ENCODE measurements at regions of chr5 and their contacts with region 1.

Region 1: GRCh38 chr5:119274767-119275130 is 81.1 kb upstream of the TNFAIP8 start:
- DNase-seq: no peak
- H3K4me3 Mint-ChIP-seq: peak overlapping the region; percentile 78
- H3K27ac Mint-ChIP-seq: peak overlapping the region; percentile 99
- H3K4me1 Mint-ChIP-seq: peaks cover 88% of the 10 kb centered on the region
- H3K27me3 Mint-ChIP-seq: peaks cover 1% of the 10 kb centered on the region

Region 2: DNA sequence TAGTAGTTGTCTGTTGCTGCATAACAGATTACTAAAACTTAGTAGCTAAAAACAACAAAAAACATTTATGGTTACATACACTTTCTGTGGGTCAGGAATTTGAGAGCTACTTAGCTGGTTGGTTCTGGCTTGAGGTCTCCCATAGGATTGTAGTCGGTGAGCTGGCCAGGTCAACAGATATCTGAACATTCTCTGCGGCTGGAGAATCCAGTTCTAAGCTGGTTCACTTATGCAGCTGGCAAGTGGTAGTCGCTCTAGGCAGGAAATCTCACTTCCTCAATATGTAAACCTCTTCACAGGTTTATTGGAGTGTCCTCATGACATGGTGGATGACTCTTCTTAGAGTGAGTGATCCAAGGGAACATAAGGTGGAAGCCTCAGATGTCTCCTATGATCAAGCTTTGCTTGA is 15.4 kb after region 1 on chr5:
- CTCF ChIA-PET with region 1: interaction called, 6 read pairs
- POLR2A ChIA-PET with region 1: interaction called, 37 read pairs
- intact Hi-C with region 1: loop called (anchors 1 kb)
- DNase-seq: no peak
- H3K4me3 Mint-ChIP-seq: peak overlapping the region; percentile 28
- H3K27ac Mint-ChIP-seq: peak overlapping the region; percentile 93
- H3K4me1 Mint-ChIP-seq: peaks cover 86% of the 10 kb centered on the region
- H3K27me3 Mint-ChIP-seq: no peaks in the 10 kb centered on the region

Region 3: DNA sequence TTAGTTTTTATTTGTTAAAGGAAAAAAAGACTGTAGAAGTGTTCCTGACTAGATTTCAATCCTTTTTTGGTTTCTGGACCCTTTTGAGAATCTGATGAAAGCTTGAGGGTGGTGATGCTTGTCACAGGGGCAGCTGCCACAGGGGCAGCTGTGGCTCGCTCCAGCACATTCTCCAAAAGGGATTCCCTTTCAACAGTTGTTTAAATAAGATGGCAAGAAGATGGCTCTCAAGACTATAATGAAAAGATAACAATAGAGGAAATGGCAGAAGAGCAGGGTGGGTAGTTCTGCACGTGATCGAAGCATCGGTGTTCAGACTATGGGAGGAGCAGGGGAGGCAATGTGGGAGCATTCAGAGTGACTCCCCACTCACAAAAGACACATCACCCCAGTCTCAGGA is 34.6 kb after region 1 on chr5:
- CTCF ChIA-PET with region 1: interaction called, 14 read pairs
- POLR2A ChIA-PET with region 1: interaction called, 7 read pairs
- intact Hi-C with region 1: loop called (anchors 2 kb)
- DNase-seq: no peak
- H3K4me3 Mint-ChIP-seq: peak overlapping the region; percentile 43
- H3K27ac Mint-ChIP-seq: peak overlapping the region; percentile 90
- H3K4me1 Mint-ChIP-seq: peaks cover 94% of the 10 kb centered on the region
- H3K27me3 Mint-ChIP-seq: no peaks in the 10 kb centered on the region

Region 4: DNA sequence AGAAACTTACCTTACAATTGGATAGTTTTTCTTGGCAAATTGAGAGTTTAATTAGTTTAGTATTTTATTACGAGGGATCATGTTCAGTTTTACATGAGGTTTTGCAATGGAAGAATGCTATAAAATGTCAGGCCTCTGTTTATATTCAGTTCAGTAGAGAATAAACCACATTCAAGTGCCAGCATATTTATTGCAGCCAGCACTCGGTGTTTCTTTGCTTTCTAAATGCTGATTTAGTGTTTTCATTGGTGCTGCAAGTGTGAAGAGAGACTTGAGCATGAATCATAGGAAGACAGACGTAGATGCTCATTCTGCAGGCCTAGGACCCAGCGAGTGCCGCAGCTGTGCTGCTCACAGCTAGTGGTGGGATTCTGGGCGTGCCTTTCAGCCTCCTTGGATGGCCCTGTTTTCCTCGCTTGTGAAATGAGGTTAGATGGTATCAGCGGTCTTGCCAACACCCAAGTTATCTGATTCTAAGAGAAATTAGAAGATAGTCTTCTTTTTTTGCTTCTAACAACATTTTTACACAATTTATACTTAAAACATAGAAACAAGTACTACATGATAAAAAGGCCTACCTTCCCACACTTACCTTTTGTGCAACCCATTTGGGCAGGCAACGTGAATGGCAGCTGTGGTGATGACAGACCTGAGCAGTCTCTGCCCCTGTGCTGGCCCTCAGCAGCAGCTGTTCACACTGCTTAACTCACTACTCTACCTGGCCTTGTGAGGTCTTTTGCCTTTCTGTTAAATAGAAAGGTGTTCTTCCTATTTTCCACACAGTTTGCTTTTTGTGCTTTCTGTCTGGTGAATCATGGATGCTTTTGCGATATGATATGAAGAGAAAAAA is 54.2 kb after region 1 on chr5:
- CTCF ChIA-PET with region 1: interaction called, 15 read pairs
- POLR2A ChIA-PET with region 1: interaction called, 13 read pairs
- intact Hi-C with region 1: no loop called
- DNase-seq: peak; percentile 76
- H3K4me3 Mint-ChIP-seq: peak overlapping the region; percentile 35
- H3K27ac Mint-ChIP-seq: peak overlapping the region; percentile 96
- H3K4me1 Mint-ChIP-seq: peaks cover 95% of the 10 kb centered on the region
- H3K27me3 Mint-ChIP-seq: no peaks in the 10 kb centered on the region

Region 5: DNA sequence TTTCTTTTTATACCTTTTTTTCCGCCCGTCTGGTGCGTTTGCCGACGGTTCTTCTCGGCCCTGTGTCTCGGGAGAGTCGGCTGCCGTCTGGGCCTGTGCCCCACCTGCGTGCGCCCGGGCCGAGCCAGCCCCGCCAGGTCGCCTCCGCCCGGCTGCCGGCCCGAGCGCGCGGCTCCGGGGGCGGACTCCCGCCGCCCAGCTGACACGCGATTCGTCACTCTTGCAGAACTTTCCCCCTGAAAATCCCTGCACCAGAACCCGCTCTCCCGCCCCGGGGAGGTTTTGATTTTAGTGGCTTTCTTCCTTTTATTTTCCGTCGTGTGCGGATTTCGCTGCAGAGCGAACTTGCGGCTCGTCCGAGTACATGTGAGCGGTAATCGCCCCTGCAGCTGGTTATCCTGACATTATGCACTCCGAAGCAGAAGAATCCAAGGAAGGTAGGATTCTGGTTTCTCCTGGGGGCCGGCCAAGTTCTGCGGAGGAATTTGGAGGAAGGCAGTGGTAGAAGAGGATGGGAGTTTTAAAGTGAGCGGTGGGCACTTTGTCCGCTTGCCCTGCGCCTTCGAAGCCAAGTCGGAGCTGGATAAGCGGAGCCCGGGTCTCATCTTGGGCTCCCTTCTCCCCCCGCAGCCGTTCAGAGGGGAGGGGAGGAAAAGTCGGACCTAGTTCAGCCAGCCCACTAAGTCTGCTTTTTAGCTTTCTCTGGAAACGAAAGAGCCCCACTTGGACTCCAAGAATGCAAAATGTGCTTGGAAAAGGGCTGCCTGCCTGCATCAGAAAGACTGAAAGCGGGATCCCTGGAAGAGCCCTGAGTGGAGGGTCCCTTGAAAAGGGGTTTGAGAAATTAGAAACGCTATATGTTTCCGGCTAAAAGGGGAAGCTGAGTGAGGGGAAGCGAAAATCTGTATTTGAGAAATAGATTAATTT is 81.2 kb after region 1 on chr5 and contains the start of gene TNFAIP8:
- CTCF ChIA-PET with region 1: interaction called, 3 read pairs
- POLR2A ChIA-PET with region 1: interaction called, 26 read pairs
- intact Hi-C with region 1: loop called (anchors 1 kb)
- DNase-seq: peak; percentile 90
- H3K4me3 Mint-ChIP-seq: peak within 1 kb of the TSS; percentile 99
- H3K27ac Mint-ChIP-seq: peak within 1 kb of the TSS; percentile 90
- H3K4me1 Mint-ChIP-seq: peaks cover 71% of the 10 kb centered on the region
- H3K27me3 Mint-ChIP-seq: no peaks in the 10 kb centered on the region
- total RNA-seq, gene TNFAIP8: 153 to 159 TPM

Measured in activated CD4-positive, alpha-beta memory T cell treated with anti-CD3 and anti-CD28 coated beads for 36 hours (primary cell).